ENCODE measurements at regions of chr2 and their contacts with region 1.

Region 1: DNA sequence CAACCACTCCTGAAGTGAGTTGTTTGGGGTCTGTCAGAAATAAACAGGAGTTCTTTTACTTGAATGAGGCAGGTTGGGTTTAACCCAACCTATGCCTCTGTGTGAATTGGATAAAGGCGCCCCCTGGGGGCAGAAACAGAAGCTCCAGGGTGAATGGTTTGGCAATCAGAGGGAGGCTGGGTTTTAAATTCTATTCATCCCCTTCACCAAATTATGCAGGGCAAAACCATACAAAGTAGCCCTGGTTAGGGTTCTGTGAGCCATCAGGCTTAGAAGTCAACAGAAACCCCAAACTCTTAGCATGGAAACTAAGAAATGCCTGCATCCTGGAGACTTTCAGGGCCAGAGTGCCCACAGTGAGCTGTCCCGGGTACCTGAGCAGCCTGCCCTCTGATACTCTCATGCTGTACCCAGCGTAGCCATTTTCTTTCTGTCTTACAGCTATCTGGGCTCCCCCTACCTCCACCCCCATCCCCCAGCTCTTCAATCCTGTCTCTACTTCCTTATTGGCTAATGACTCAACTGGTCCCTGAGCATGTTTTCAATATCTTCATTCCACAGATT is 241.5 kb downstream of the ICOS start:
- DNase-seq: peak; percentile 29 to 86
- H3K4me3 ChIP-seq: no peak overlapping the region
- H3K27ac ChIP-seq: no peak overlapping the region
- H3K4me1 ChIP-seq: no peaks in the 10 kb centered on the region
- H3K27me3 ChIP-seq: peaks cover 0 to 1% (median 0%) of the 10 kb centered on the region in 4 experiments; a peak in 1 of 7 replicates
- CTCF ChIP-seq: peak; percentile 41 to 70 (median 64)
- EP300 ChIP-seq: no peak
- POLR2A ChIP-seq: no peak
- RAD21 ChIP-seq: peak; percentile 56 to 70

Region 2: DNA sequence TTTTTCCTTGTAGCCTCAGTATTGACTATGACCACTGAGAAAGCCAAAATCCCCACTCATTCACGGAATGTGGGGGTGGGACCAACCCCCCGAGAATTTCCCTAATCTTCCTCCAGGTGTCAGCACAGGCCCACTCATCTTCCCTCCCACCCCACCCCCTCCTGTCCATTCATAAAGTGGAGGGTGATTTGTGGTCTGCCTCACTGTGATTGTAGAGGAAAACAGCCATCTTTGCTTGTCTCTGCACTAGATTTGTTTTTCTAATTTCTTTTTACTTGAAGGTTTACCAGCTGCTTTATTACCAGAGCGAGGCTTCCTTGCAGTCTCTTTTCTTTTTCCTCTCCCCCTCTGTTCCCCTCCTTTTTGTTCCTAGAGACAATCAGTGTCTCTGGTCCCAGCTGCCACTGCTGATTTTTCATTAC is 69.7 kb before region 1 on chr2:
- CTCF ChIA-PET with region 1: interaction called, 10 read pairs
- POLR2A ChIA-PET with region 1: no interaction called
- DNase-seq: no peak
- H3K4me3 ChIP-seq: no peak overlapping the region
- H3K27ac ChIP-seq: no peak overlapping the region
- H3K4me1 ChIP-seq: peaks cover 0 to 5% (median 0%) of the 10 kb centered on the region in 4 experiments; a peak in 3 of 7 replicates
- H3K27me3 ChIP-seq: no peaks in the 10 kb centered on the region
- CTCF ChIP-seq: peak; percentile 46 to 59 (median 58)
- EP300 ChIP-seq: no peak
- POLR2A ChIP-seq: no peak
- RAD21 ChIP-seq: peak; percentile 78 to 82

Region 3: GRCh38 chr2:204140246-204140645 is 37.8 kb before region 1 on chr2:
- CTCF ChIA-PET with region 1: interaction called, 70 read pairs
- POLR2A ChIA-PET with region 1: no interaction called
- DNase-seq: no peak
- H3K4me3 ChIP-seq: no peak overlapping the region
- H3K27ac ChIP-seq: no peak overlapping the region
- H3K4me1 ChIP-seq: peaks cover 0 to 4% (median 0%) of the 10 kb centered on the region in 4 experiments; a peak in 1 of 7 replicates
- H3K27me3 ChIP-seq: no peaks in the 10 kb centered on the region
- CTCF ChIP-seq: no peak
- EP300 ChIP-seq: no peak
- POLR2A ChIP-seq: no peak
- RAD21 ChIP-seq: no peak

Region 4: GRCh38 chr2:204152616-204153015 is 25.4 kb before region 1 on chr2:
- CTCF ChIA-PET with region 1: interaction called, 55 read pairs
- POLR2A ChIA-PET with region 1: no interaction called
- DNase-seq: no peak
- H3K4me3 ChIP-seq: no peak overlapping the region
- H3K27ac ChIP-seq: no peak overlapping the region
- H3K4me1 ChIP-seq: peaks cover 0 to 4% (median 0%) of the 10 kb centered on the region in 4 experiments; a peak in 1 of 7 replicates
- H3K27me3 ChIP-seq: no peaks in the 10 kb centered on the region
- CTCF ChIP-seq: no peak
- EP300 ChIP-seq: no peak
- POLR2A ChIP-seq: no peak
- RAD21 ChIP-seq: no peak

Region 5: DNA sequence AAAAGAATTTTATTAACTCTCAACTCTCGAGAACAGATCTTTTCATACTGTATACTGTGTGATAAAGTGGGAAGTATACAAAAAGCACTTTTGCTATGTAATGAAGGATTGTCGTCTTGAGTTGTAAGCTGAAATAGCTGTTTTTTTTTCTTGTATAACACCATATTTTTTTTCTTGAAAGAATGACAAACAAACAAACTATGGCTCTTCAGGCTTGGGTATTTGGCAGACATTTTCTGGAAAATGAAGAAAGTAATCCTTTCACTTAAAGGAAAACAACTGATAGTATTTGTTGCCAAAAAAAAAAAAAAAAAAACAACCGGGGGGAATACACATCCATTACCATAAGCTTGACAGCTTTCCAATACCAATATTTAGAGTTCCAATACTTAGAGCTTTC is 11.1 kb before region 1 on chr2:
- CTCF ChIA-PET with region 1: interaction called, 41 read pairs
- POLR2A ChIA-PET with region 1: no interaction called
- DNase-seq: no peak
- H3K4me3 ChIP-seq: no peak overlapping the region
- H3K27ac ChIP-seq: no peak overlapping the region
- H3K4me1 ChIP-seq: peaks cover 5 to 14% (median 10%) of the 10 kb centered on the region in 4 experiments; a peak in 6 of 7 replicates
- H3K27me3 ChIP-seq: no peaks in the 10 kb centered on the region
- CTCF ChIP-seq: no peak
- EP300 ChIP-seq: no peak
- POLR2A ChIP-seq: no peak
- RAD21 ChIP-seq: no peak

Measured in H1 (cell line).